ENCODE measurements at regions of chr15 and their contacts with region 1.

Region 1: DNA sequence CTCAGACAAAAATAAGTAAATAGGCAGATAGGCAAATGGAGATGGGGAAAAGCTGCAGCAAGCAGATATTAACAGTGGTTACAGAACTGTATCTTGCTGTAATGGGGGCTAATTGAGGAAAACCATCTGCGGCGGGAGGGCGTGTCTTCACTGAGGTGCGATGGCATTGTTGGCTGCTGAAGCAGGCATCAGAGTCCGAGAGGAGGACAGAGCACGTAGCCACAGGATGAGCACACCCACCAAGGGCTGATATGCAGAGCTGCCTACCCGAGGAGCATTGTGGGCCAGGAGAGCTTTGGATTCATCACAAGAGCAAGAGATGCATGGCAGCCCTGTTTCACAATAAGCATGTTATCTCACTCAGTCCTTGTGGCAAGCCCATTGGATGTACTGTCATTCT is 30.4 kb downstream of the CHRNA7 start:
- H3K4me3 Mint-ChIP-seq: no peak overlapping the region
- H3K27ac Mint-ChIP-seq: no peak overlapping the region
- H3K4me1 Mint-ChIP-seq: no peaks in the 10 kb centered on the region
- H3K27me3 Mint-ChIP-seq: no peaks in the 10 kb centered on the region

Region 2: GRCh38 chr15:32003558-32003957 is 57.1 kb before region 1 on chr15:
- intact Hi-C with region 1: no loop called
- H3K4me3 Mint-ChIP-seq: no peak overlapping the region
- H3K27ac Mint-ChIP-seq: no peak overlapping the region
- H3K4me1 Mint-ChIP-seq: no peaks in the 10 kb centered on the region
- H3K27me3 Mint-ChIP-seq: no peaks in the 10 kb centered on the region

Region 3: GRCh38 chr15:32119694-32120330 is 59.1 kb after region 1 on chr15:
- intact Hi-C with region 1: loop called (anchors 10 kb)
- H3K4me3 Mint-ChIP-seq: no peak overlapping the region
- H3K27ac Mint-ChIP-seq: no peak overlapping the region
- H3K4me1 Mint-ChIP-seq: no peaks in the 10 kb centered on the region
- H3K27me3 Mint-ChIP-seq: no peaks in the 10 kb centered on the region

Measured in dendritic cell treated with granulocyte-macrophage colony-stimulating factor and Interleukin-4, amounts not matched to agents 40 ng/mL and 50 ng/mL, for 4 days (primary cell).